HCT116 (cell line): ENCODE measurements at regions of chr18 and their contacts with region 1.

Region 1: DNA sequence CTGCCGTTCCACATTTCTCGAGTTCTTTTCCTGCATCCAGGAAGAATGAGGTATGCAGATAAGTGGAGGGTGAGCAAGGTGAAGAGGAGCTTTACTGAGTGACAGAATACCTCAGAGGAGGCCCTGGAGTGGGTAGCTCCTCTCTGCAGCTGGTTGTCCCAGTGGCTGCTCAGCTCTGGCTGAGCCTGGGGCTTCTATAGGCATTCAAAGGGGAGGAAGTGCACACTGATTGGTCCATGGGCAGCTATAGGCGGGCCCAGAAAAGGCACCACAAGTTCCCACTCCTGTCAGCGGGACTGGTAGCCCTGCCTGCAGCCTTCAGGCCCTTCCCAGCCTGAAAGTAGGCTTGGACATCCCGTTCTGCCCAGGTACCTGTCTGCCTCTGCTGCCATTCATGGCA is 94.7 kb downstream of the DOK6 start:
- DNase-seq: no peak
- ATAC-seq: no peak
- H3K4me3 ChIP-seq: no peak overlapping the region
- H3K27ac ChIP-seq: no peak overlapping the region
- H3K4me1 ChIP-seq: no peaks in the 10 kb centered on the region
- H3K27me3 ChIP-seq: no peaks in the 10 kb centered on the region
- CTCF ChIP-seq: no peak
- POLR2A ChIP-seq: no peak
- RAD21 ChIP-seq: no peak

Region 2: DNA sequence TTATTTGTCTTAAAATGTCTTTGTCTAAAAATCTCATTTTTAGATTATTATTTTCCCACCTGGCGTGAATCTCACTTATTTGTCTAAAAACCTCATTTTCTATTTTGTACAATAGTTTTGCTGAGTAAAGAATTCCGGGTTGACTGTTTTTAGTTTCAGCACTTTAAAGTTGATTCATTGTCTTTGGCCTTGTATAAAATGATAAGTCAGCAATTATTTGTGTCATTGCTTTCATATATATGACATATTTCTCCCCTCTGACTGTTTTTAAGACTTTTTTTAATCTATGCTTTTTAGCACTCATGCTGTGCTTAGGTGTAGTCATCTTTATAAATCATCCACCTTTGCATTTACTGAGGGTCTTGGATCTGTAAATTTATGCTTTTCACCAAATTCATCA is 186.7 kb before region 1 on chr18:
- CTCF ChIA-PET with region 1: no interaction called
- POLR2A ChIA-PET with region 1: no interaction called
- RAD21 ChIA-PET with region 1: no interaction called
- intact Hi-C with region 1: no loop called
- DNase-seq: no peak
- ATAC-seq: no peak
- H3K4me3 ChIP-seq: no peak overlapping the region
- H3K27ac ChIP-seq: no peak overlapping the region
- H3K4me1 ChIP-seq: no peaks in the 10 kb centered on the region
- H3K27me3 ChIP-seq: no peaks in the 10 kb centered on the region
- CTCF ChIP-seq: no peak
- POLR2A ChIP-seq: no peak
- RAD21 ChIP-seq: no peak

Region 3: GRCh38 chr18:69518989-69519388 is 23.7 kb after region 1 on chr18:
- CTCF ChIA-PET with region 1: no interaction called
- POLR2A ChIA-PET with region 1: no interaction called
- RAD21 ChIA-PET with region 1: no interaction called
- intact Hi-C with region 1: loop called (anchors 2 kb)
- DNase-seq: no peak
- ATAC-seq: no peak
- H3K4me3 ChIP-seq: no peak overlapping the region
- H3K27ac ChIP-seq: no peak overlapping the region
- H3K4me1 ChIP-seq: no peaks in the 10 kb centered on the region
- H3K27me3 ChIP-seq: no peaks in the 10 kb centered on the region
- CTCF ChIP-seq: no peak
- POLR2A ChIP-seq: no peak
- RAD21 ChIP-seq: no peak

Region 4: DNA sequence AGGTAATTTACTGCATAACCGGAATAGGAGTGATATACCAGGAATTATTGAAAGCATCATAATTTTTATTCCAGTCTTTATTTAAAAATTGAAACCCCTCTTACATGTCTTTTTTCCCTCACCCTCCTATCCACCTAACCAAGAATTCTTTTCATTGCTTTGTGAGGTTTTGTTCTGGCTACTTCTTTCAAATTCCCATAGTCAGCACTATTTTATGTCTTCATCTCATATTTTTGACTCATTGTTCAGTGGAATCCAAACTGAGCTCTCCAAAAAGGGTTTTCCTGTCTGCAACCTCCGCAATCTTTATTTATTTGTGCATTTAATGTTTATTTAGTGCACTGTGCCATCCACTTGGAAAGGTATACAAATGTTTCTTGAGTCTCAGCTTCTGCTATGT is 33.8 kb after region 1 on chr18:
- CTCF ChIA-PET with region 1: no interaction called
- POLR2A ChIA-PET with region 1: no interaction called
- RAD21 ChIA-PET with region 1: no interaction called
- intact Hi-C with region 1: no loop called
- DNase-seq: no peak
- ATAC-seq: no peak
- H3K4me3 ChIP-seq: no peak overlapping the region
- H3K27ac ChIP-seq: no peak overlapping the region
- H3K4me1 ChIP-seq: no peaks in the 10 kb centered on the region
- H3K27me3 ChIP-seq: no peaks in the 10 kb centered on the region
- CTCF ChIP-seq: no peak
- POLR2A ChIP-seq: no peak
- RAD21 ChIP-seq: no peak